ENCODE measurements at regions of chr17 and their contacts with region 1.

Region 1: DNA sequence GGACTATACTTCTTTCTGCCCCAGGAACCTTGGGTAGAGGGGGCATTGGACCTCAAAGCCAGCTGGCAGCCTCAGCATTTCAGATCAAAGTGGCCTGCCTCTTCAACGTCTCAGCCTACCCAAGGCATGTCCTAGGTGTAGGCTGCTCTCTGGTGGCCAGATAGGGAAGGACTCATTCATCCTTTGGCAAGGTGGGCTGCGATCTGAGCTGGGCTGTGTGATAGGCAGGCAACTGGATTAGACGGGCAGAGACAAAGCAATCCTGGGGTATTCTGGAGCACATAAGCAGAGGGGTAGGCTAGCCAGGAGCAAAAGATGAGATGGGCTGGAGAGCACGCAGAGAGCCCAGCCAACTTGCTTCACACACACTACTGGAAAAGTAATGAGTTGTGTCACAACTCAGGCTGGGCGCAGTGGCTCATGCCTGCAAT is 8.8 kb upstream of the NAGLU start:
- DNase-seq: no peak
- H3K4me3 ChIP-seq: no peak overlapping the region
- CTCF ChIP-seq: peak; percentile 91

Region 2: DNA sequence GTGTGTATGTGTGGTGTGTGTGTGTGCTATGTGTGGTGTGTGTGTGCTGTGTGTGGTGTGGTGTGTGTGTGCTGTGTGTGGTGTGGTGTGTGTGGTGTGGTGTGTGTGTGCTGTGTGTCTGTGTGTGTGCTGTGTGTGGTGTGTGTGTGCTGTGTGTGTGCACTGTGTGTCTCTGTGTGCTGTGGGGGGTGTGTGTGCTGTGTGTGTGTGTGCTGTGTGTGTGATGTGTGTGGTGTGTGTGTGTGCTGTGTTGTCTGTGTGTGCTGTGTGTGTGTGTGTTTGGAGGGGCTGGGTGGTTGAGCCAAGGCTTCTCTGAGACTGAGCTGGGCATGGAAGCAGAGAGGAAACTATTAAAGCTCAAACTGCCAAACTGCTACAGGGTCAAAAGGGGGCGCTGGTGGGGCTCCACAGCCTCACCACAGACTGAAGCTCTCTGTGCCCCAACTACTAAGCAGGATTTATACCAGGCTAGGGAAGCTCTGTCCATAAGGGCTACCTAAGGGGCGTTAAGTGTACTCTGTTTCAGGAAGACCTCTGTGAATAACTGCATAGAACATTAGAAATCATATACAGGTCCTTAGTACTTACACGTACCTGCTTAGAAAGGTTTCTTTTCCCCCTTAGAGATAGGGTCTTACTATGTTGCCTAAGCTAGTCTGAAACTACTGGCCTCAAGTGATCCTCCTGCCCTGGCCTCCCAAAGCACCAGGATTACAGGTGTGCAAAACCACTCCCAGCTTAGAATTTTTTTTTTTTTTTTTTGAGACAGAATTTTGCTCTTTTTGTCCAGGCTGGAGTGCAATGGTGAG is 305.1 kb before region 1 on chr17:
- CTCF ChIA-PET with region 1: interaction called, 11 read pairs
- POLR2A ChIA-PET with region 1: no interaction called
- DNase-seq: no peak
- H3K4me3 ChIP-seq: no peak overlapping the region
- CTCF ChIP-seq: peak; percentile 71

Region 3: DNA sequence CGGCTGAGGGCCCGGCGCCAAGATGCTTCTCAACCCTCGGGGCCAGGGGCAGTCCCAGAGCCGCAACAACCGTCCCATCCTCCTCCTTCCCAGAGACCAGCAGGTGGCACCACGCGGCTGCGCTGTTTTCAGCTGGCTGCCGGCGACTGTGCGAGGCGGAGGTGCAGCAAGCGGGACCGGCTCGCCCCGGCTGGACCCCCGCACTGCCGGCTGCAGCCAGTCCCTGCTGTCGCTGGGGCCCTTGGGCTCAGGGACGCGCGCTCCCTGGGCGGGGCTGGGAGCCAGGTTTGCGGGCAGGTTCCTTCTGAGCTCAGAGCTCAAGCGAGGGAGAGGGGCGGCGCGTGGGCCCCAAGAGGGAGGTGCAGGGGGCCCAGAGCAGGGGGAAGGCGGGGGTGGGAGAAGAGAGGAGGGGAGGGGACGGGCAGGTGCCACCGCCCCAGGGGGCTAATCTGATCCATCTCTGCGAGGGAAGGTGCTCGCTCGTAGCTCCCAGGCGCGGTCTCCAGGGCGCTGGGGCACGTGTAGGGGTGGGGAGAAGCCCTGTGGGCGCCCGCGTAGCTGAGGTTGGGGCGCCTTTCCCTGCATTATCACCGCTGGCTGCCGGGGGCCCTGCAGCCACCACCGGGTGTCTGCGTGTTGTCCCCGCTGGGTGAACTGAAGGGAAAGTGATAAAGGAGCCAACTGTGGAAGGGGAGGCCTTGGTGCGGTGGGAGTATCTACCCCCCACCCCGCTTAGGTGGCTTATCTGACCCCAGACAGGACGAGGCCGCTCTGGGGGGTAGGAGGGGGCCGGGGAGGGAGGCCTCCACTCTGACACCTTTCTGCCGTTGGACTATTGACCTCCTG is 214.8 kb before region 1 on chr17:
- CTCF ChIA-PET with region 1: interaction called, 170 read pairs
- POLR2A ChIA-PET with region 1: interaction called, 4 read pairs
- DNase-seq: no peak
- H3K4me3 ChIP-seq: no peak overlapping the region
- CTCF ChIP-seq: peak; percentile 89

Region 4: GRCh38 chr17:42322382-42323267 is 204.7 kb before region 1 on chr17:
- CTCF ChIA-PET with region 1: interaction called, 170 read pairs
- POLR2A ChIA-PET with region 1: no interaction called
- DNase-seq: peak; percentile 76
- H3K4me3 ChIP-seq: no peak overlapping the region
- CTCF ChIP-seq: peak; percentile 100

Region 5: DNA sequence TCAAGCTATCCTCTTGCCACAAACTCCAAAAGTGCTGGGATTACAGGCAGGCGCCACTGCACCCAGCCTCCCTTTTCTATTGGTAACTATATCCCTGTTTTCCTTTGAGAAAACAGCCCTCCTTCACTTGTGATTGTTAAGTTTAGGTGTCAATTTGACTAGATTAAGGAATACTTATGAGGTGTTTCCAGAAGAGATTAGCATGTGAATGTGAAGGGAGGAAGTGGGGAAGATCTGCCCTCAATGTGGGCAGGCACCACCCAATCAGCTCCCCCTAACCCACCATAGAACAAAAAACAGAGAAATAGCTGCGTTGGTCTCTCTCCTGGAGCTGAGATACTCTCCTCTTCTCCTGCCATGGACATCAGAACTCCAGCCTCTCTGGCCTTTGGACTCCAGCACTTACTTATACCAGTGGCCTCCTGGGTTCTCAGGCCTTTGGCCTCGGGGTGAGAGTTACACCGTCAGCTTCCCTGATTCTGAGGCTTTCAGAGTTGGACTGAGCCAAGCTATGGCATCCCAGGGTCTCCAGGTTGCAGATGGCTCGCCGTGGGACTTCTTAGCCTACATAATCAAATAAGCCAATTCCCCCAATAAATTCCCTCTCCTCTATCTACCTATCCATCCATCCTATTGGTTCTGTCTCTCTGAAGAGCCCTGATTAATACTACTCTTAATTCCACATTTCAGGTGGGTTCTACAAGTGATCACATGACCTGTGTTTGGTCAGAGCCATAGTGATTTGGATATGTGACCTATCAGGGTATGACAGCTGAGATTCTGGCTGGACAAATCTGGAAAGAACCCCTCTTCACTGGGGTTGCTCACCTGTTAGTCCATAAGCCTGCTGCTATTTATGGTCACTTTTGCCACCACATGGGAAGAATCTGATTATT is 127.1 kb before region 1 on chr17:
- CTCF ChIA-PET with region 1: interaction called, 12 read pairs
- POLR2A ChIA-PET with region 1: interaction called, 5 read pairs
- DNase-seq: no peak
- H3K4me3 ChIP-seq: no peak overlapping the region
- CTCF ChIP-seq: no peak

Region 6: GRCh38 chr17:42422958-42423712 is 104.2 kb before region 1 on chr17 and contains the start of gene CAVIN1:
- CTCF ChIA-PET with region 1: interaction called, 10 read pairs
- POLR2A ChIA-PET with region 1: interaction called, 32 read pairs
- DNase-seq: peak; percentile 92
- H3K4me3 ChIP-seq: peak within 1 kb of the TSS; percentile 100
- CTCF ChIP-seq: no peak

Region 7: GRCh38 chr17:42428141-42428944 is 98.9 kb before region 1 on chr17:
- CTCF ChIA-PET with region 1: interaction called, 10 read pairs
- POLR2A ChIA-PET with region 1: interaction called, 32 read pairs
- DNase-seq: peak; percentile 98
- H3K4me3 ChIP-seq: no peak overlapping the region
- CTCF ChIP-seq: peak; percentile 79

Measured in AG04449 (cell line).